Activated CD4-positive, alpha-beta T cell treated with anti-CD3 and anti-CD28 coated beads for 36 hours (primary cell): ENCODE measurements at regions of chr11 and their contacts with region 1.

Region 1: DNA sequence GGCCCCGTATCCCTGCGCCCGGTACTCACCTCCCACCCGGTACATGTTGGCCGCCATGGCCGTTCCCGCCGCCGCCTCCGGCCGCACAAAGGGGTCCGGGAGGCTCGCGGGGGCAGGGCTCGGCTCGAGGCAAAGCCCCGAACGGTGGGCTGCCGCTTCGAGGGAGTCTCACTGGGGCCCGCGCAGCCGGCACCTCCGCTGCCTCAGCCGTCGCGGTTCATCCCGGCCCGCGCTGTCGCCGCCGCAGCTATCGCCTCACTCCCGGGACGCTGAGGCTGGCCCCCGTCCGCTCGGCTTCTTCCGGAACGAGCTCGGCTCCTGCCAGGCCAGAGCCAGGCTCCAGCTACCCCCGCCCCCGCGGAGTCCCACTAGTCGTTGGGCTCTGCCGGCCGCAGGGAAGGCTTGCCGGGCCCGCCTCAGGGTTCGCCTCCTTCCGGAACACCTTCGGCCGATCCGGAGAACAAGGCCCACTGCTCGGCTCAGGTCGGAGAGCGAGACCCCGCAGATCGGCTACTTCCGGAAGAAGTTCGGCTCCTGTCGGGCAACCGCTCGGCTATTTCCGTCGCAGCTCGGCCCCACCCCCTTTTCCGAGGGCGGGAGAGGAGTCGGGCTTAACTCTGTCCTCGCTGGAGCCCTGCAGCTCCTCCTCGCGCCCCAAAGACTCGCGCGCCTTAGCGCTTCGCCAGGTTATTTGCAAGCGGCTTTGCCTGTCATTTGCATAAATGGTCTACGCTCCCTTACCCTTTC is at the start of gene MTA2:
- DNase-seq: peak; percentile 100
- ATAC-seq: peak; percentile 89
- H3K4me3 Mint-ChIP-seq: peak within 1 kb of the TSS; percentile 91
- H3K27ac Mint-ChIP-seq: peak within 1 kb of the TSS; percentile 96
- H3K4me1 Mint-ChIP-seq: peaks cover 51% of the 10 kb centered on the region
- H3K27me3 Mint-ChIP-seq: no peaks in the 10 kb centered on the region
- total RNA-seq, gene MTA2: 159 to 179 TPM

Region 2: GRCh38 chr11:62295504-62295903 is 306.1 kb before region 1 on chr11:
- CTCF ChIA-PET with region 1: no interaction called
- POLR2A ChIA-PET with region 1: no interaction called
- intact Hi-C with region 1: no loop called
- DNase-seq: peak; percentile 47
- ATAC-seq: no peak
- H3K4me3 Mint-ChIP-seq: no peak overlapping the region
- H3K27ac Mint-ChIP-seq: no peak overlapping the region
- H3K4me1 Mint-ChIP-seq: no peaks in the 10 kb centered on the region
- H3K27me3 Mint-ChIP-seq: peaks cover 26% of the 10 kb centered on the region

Region 3: DNA sequence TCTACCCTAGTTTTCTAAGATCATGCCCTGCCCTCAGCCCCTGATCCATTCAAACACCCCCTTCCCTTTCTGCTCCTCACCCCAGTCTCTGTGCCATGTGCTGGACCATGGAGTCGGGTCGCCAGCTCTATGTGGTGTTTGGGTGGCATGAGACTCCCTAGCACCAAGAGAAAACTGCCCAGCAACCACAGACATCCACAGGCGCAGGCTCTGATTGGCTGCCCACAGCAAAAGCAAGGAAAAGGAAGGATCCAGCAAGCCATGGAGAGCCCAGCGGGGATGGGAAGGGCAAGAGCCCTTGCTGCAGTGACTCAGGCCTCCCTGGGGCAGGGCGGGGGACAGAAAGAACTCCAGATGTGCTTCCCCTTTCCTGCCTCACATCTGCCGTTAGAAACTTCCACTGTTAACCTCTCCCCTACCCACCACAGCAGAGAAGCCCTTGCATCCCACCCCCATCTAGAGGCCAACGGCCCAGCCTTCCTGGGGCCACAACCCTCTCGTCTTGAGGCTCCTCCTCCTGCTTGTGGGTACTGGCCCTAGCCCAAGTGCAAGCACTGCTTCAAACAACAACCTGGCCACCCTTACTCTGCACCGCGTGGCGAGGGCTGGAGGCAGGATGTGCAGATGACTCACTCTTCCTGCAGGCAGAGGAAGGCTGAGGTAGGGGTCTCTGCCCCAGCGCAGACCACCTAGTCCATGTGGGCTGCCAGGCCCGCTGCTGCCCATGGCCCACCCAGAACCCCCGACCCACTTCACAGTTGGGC is 45.3 kb before region 1 on chr11:
- CTCF ChIA-PET with region 1: no interaction called
- POLR2A ChIA-PET with region 1: interaction called, 3 read pairs
- intact Hi-C with region 1: loop called (anchors 2 kb)
- DNase-seq: peak; percentile 92
- ATAC-seq: peak; percentile 65
- H3K4me3 Mint-ChIP-seq: peak overlapping the region; percentile 54
- H3K27ac Mint-ChIP-seq: peak overlapping the region; percentile 92
- H3K4me1 Mint-ChIP-seq: peaks cover 98% of the 10 kb centered on the region
- H3K27me3 Mint-ChIP-seq: no peaks in the 10 kb centered on the region

Region 4: DNA sequence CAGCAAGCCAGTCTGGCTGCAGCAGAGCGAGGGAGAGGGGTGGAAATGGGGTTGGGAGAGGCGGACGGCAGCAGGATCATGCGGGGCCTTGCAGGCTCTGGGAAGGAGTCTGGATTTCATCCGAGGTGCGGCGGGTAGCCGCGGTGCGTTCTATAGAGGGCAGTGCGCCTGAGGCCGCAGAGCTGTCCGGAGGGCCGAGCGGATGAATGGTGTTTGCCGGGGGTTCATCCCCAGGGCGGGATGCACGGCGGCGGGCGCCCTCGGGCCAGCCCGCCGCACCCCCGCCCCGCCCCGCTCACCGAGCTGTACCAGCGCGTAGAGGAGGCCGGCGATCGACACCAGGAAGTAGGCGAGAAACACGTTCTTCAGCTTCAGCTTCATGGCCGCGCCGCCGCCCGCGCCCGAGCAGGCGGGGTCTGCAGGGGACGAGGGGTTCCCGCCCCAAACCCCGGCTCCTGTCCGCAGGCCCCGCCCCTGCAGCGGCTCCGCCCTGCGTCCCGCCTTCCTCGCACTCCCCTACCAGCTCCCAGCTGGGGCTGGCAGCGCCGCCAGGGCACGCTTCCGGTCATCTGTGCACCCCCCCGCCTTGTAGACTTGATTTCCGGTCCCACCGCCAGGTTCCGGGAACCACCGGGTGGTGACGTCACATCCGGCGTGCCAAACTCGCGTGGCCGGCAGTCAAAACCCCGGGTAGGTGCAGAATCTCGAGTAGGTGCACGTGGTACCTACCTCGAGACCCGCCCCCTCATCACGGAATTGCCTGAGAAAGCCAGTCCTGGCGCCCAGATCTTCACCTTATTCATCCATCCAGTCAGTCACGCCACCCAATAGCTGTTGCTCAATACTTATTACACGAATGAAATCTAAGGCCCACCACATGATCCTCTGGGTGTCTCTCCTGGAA is 20.3 kb after region 1 on chr11 and contains the start of gene B3GAT3:
- CTCF ChIA-PET with region 1: interaction called, 10 read pairs
- POLR2A ChIA-PET with region 1: interaction called, 5 read pairs
- intact Hi-C with region 1: loop called in 1 of 2 experiments (anchors 1 kb)
- DNase-seq: peak; percentile 97
- ATAC-seq: peak; percentile 94
- H3K4me3 Mint-ChIP-seq: peak within 1 kb of the TSS; percentile 92
- H3K27ac Mint-ChIP-seq: peak within 1 kb of the TSS; percentile 94
- H3K4me1 Mint-ChIP-seq: peaks cover 29% of the 10 kb centered on the region
- H3K27me3 Mint-ChIP-seq: no peaks in the 10 kb centered on the region
- total RNA-seq, gene B3GAT3: 48.7 to 57.5 TPM

Region 5: DNA sequence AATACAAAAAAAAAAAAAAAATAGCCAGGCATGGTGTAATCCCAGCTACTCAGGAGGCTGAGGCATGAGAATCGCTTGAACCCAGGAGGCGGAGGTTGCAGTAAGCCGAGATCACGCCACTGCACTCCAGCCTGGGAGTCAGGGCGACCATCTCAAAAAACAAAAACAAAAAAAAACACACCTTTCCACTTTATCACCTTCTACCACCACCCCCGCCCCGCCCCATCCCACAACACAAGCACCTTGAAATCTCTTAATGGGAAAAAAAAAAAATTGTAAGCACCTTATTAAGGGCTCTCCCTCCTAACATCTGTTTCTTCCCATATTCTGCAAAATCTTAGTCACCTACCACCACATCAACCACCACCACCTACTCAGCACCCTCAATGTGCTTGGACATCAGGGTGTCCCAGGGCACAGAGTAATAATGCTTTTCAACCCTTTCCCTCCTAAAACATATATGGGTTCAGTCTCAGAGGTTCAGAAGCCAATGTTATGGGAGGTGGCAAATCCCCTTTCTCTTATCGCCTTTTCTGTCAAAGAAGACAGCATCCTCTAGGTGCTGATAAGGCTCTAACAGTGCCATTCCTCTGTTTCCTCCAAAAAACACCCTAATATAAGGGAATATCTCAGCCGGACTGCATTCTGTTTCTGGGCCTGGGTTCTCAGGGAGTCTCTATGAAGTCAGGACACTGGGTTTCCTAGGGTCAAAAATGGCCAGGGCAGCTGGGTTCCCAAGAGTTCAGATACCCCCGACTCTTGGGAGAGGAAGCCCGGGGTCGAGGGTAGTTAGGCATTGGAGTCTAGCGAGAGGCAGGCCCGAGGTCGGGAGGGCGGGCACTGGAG is 50.8 kb after region 1 on chr11:
- CTCF ChIA-PET with region 1: no interaction called
- POLR2A ChIA-PET with region 1: interaction called, 4 read pairs
- intact Hi-C with region 1: loop called in 1 of 2 experiments (anchors 1 kb)
- DNase-seq: no peak
- ATAC-seq: no peak
- H3K4me3 Mint-ChIP-seq: peak overlapping the region; percentile 88
- H3K27ac Mint-ChIP-seq: peak overlapping the region; percentile 91
- H3K4me1 Mint-ChIP-seq: peaks cover 23% of the 10 kb centered on the region
- H3K27me3 Mint-ChIP-seq: no peaks in the 10 kb centered on the region

Region 6: DNA sequence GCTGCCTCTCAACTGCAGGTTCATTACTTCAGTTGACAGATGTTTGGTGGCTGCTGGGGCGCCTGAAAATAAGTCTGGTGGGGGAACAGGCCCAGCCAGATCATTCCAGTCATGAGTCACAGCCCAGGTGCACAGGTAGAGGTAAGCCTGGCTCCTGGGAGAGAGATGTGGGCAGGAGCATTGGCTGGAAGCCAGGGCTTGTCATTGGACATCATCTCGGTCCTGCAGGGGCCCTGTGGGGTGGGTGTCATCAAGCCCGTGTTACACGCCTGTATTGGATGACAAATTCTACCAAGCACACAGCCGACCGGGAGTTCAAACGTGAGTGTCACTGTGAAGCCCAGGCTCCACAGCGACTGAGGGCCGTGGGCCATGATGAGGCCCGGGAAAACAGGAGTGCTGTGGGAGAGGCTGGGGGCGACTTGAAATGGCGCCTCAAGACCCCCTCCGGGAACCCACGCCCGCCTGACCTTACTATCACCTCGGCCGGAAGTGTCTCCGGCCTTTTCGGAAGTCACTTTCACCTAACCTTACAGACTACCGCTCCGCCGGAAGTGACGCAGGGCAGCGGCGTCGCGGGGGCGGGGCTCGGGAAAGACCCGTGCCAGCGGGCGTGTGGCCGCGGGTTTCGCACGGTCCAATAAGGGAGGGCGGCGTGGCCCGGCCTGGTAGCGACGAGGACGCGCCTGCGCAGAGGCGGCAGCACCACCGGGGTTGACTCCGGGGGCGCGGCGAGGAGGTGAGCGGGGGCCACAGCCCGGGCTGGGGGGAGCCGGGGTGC is 1639.0 kb after region 1 on chr11 and contains the start of gene FKBP2:
- CTCF ChIA-PET with region 1: no interaction called
- POLR2A ChIA-PET with region 1: no interaction called
- intact Hi-C with region 1: loop called in 1 of 2 experiments (anchors 10 kb)
- DNase-seq: peak; percentile 99
- ATAC-seq: peak; percentile 68
- H3K4me3 Mint-ChIP-seq: peak within 1 kb of the TSS; percentile 86
- H3K27ac Mint-ChIP-seq: peak within 1 kb of the TSS; percentile 99
- H3K4me1 Mint-ChIP-seq: peaks cover 31% of the 10 kb centered on the region
- H3K27me3 Mint-ChIP-seq: no peaks in the 10 kb centered on the region
- total RNA-seq, gene FKBP2: 19.9 to 21.3 TPM